ENCODE measurements at regions of chr6 and their contacts with region 1.

Region 1: GRCh38 chr6:152669895-152670294 is 27.8 kb upstream of the MYCT1 start:
- DNase-seq: no peak
- H3K4me3 Mint-ChIP-seq: no peak overlapping the region
- H3K27ac Mint-ChIP-seq: no peak overlapping the region
- H3K4me1 Mint-ChIP-seq: no peaks in the 10 kb centered on the region
- H3K27me3 Mint-ChIP-seq: no peaks in the 10 kb centered on the region
- CTCF ChIP-seq: no peak

Region 2: DNA sequence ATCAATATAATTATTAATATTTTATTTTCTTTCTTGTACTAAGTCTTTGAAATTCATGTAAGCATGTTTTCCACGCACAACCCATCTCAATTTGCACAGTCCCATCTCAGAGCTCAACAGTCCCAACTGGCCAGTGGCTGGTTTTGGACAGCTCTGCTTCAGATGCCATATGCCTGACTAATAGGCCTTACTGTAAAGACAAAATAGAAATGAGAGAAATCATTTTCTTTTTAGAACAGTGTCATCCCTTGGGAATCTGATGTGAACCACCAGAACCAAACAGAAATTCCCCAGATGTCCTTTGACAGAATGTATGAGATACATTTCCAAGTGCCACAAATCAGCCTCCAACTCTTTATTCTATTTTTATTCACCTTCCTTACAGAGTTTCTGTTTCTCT is 523.5 kb before region 1 on chr6:
- CTCF ChIA-PET with region 1: no interaction called
- intact Hi-C with region 1: no loop called
- DNase-seq: no peak
- H3K4me3 Mint-ChIP-seq: no peak overlapping the region
- H3K27ac Mint-ChIP-seq: no peak overlapping the region
- H3K4me1 Mint-ChIP-seq: no peaks in the 10 kb centered on the region
- H3K27me3 Mint-ChIP-seq: no peaks in the 10 kb centered on the region
- CTCF ChIP-seq: no peak

Region 3: GRCh38 chr6:152484806-152485205 is 185.1 kb before region 1 on chr6:
- CTCF ChIA-PET with region 1: no interaction called
- intact Hi-C with region 1: loop called (anchors 10 kb)
- DNase-seq: no peak
- H3K4me3 Mint-ChIP-seq: no peak overlapping the region
- H3K27ac Mint-ChIP-seq: no peak overlapping the region
- H3K4me1 Mint-ChIP-seq: no peaks in the 10 kb centered on the region
- H3K27me3 Mint-ChIP-seq: no peaks in the 10 kb centered on the region
- CTCF ChIP-seq: no peak